CD8-positive, alpha-beta T cell (primary cell): ENCODE measurements at regions of chr17 and their contacts with region 1.

Region 1: GRCh38 chr17:40113110-40113906 is 8.5 kb upstream of the MSL1 start:
- DNase-seq: peak; percentile 86 to 96 (median 93)
- ATAC-seq: peak; percentile 78
- H3K4me3 ChIP-seq: peak overlapping the region; percentile 40
- H3K4me3 Mint-ChIP-seq: peak overlapping the region; percentile 82
- H3K27ac ChIP-seq: peak overlapping the region; percentile 12 to 22
- H3K27ac Mint-ChIP-seq: peak overlapping the region; percentile 89
- H3K4me1 ChIP-seq: peaks cover 55% of the 10 kb centered on the region
- H3K4me1 Mint-ChIP-seq: peaks cover 60% of the 10 kb centered on the region
- H3K27me3 ChIP-seq: no peaks in the 10 kb centered on the region
- H3K27me3 Mint-ChIP-seq: no peaks in the 10 kb centered on the region
- CTCF ChIP-seq: peak; percentile 81

Region 2: DNA sequence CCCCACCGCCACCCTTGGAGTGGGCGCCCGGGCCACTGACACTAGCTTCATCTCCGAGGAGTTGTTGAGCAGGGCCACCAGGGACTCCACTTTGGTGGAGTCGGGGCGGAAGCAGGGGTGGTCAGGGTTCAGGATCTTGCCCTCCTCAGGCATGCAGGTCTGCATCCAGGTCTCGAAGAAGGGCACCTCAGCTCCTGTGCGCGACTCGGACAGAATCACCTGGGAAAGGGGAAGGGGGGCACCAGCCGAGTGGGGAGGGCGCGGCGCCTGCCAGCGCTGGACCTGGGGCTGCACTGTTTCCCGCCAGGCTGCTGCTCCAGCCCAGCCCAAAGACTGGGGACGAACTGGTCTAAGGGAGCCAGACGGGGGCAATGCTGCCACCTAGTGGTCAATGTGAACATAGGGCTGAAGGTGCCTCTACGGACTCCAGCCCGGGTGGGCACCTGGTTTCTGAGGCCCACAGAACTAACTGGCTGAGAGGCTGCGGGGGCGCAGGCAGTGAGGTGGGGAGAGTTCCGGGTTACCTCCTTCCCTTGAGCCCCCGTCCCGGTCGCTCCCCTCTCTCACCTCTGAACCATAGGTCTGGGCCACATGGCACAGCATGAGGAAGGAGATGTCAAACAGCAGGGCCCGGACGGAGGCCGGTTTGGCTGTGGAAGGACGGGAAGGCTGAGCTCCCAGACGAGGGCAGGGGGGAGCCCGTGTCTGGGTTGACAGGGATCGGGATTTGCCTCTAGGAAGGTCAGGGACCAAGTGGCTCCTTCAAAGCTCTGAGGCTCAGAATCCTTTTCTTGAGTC is 86.3 kb before region 1 on chr17:
- CTCF ChIA-PET with region 1: interaction called, 14 read pairs
- POLR2A ChIA-PET with region 1: interaction called, 3 read pairs
- intact Hi-C with region 1: no loop called
- DNase-seq: peak; percentile 45 to 87 (median 78)
- ATAC-seq: peak; percentile 88
- H3K4me3 ChIP-seq: no peak overlapping the region
- H3K4me3 Mint-ChIP-seq: no peak overlapping the region
- H3K27ac ChIP-seq: no peak overlapping the region
- H3K27ac Mint-ChIP-seq: no peak overlapping the region
- H3K4me1 ChIP-seq: peaks cover 21% of the 10 kb centered on the region
- H3K4me1 Mint-ChIP-seq: peaks cover 22% of the 10 kb centered on the region
- H3K27me3 ChIP-seq: no peaks in the 10 kb centered on the region
- H3K27me3 Mint-ChIP-seq: no peaks in the 10 kb centered on the region
- CTCF ChIP-seq: peak; percentile 79

Region 3: GRCh38 chr17:40075201-40075941 is 37.9 kb before region 1 on chr17:
- CTCF ChIA-PET with region 1: interaction called, 122 read pairs
- POLR2A ChIA-PET with region 1: interaction called, 56 read pairs
- intact Hi-C with region 1: loop called in 1 of 2 experiments (anchors 1 kb)
- DNase-seq: peak; percentile 48 to 81 (median 70)
- ATAC-seq: peak; percentile 96
- H3K4me3 ChIP-seq: no peak overlapping the region
- H3K4me3 Mint-ChIP-seq: peak overlapping the region; percentile 45
- H3K27ac ChIP-seq: no peak overlapping the region
- H3K27ac Mint-ChIP-seq: peak overlapping the region; percentile 62
- H3K4me1 ChIP-seq: peaks cover 49% of the 10 kb centered on the region
- H3K4me1 Mint-ChIP-seq: peaks cover 53% of the 10 kb centered on the region
- H3K27me3 ChIP-seq: no peaks in the 10 kb centered on the region
- H3K27me3 Mint-ChIP-seq: no peaks in the 10 kb centered on the region
- CTCF ChIP-seq: peak; percentile 90

Region 4: GRCh38 chr17:40098846-40099618 is 14.3 kb before region 1 on chr17:
- CTCF ChIA-PET with region 1: interaction called, 237 read pairs
- POLR2A ChIA-PET with region 1: interaction called, 141 read pairs
- intact Hi-C with region 1: loop called (anchors 1 kb)
- DNase-seq: peak; percentile 97 to 100 (median 99)
- ATAC-seq: peak; percentile 64
- H3K4me3 ChIP-seq: peak overlapping the region; percentile 75 to 90
- H3K4me3 Mint-ChIP-seq: peak overlapping the region; percentile 94
- H3K27ac ChIP-seq: peak overlapping the region; percentile 79 to 98
- H3K27ac Mint-ChIP-seq: peak overlapping the region; percentile 95
- H3K4me1 ChIP-seq: peaks cover 80% of the 10 kb centered on the region
- H3K4me1 Mint-ChIP-seq: peaks cover 88% of the 10 kb centered on the region
- H3K27me3 ChIP-seq: no peaks in the 10 kb centered on the region
- H3K27me3 Mint-ChIP-seq: no peaks in the 10 kb centered on the region
- CTCF ChIP-seq: no peak

Region 5: DNA sequence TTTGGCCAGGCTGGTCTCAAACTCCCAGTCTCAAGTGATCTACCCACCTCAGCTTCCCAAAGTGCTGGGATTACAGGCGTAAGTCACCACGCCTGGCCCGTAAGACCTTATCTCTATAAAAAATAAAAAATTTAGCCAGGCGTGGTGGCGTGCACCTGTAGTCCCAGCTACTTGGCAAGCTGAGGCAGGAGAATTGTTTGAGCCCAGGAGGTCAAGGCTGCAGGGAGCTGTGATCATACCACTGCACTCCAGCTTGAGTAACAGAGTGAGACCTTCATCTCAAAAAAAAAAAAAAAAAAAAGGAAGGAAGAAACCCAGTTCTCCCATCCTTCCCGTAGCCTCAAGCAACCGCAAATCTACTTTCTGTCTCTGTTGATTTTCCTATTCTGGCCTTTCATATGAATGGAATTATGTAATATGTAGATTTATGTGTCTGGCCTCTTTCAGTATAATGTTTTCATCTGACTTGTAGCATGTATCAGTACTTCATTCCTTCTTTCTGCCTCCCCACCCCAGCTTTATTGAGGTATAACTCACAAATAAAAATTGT is 38.2 kb after region 1 on chr17:
- CTCF ChIA-PET with region 1: interaction called, 12 read pairs
- POLR2A ChIA-PET with region 1: no interaction called
- intact Hi-C with region 1: no loop called
- DNase-seq: no peak
- ATAC-seq: no peak
- H3K4me3 ChIP-seq: no peak overlapping the region
- H3K4me3 Mint-ChIP-seq: no peak overlapping the region
- H3K27ac ChIP-seq: no peak overlapping the region
- H3K27ac Mint-ChIP-seq: no peak overlapping the region
- H3K4me1 ChIP-seq: peaks cover 14% of the 10 kb centered on the region
- H3K4me1 Mint-ChIP-seq: peaks cover 58% of the 10 kb centered on the region
- H3K27me3 ChIP-seq: no peaks in the 10 kb centered on the region
- H3K27me3 Mint-ChIP-seq: no peaks in the 10 kb centered on the region
- CTCF ChIP-seq: no peak

Region 6: GRCh38 chr17:40177275-40177874 is 64.1 kb after region 1 on chr17 and contains the start of gene RAPGEFL1:
- CTCF ChIA-PET with region 1: interaction called, 50 read pairs
- POLR2A ChIA-PET with region 1: interaction called, 4 read pairs
- intact Hi-C with region 1: no loop called
- DNase-seq: peak; percentile 70 to 90 (median 81)
- ATAC-seq: peak; percentile 99
- H3K4me3 ChIP-seq: peak within 1 kb of the TSS; percentile 53 to 54
- H3K4me3 Mint-ChIP-seq: peak within 1 kb of the TSS; percentile 72
- H3K27ac ChIP-seq: no peak within 1 kb of the TSS
- H3K27ac Mint-ChIP-seq: no peak within 1 kb of the TSS
- H3K4me1 ChIP-seq: peaks cover 12% of the 10 kb centered on the region
- H3K4me1 Mint-ChIP-seq: peaks cover 11% of the 10 kb centered on the region
- H3K27me3 ChIP-seq: no peaks in the 10 kb centered on the region
- H3K27me3 Mint-ChIP-seq: no peaks in the 10 kb centered on the region
- CTCF ChIP-seq: no peak
- total RNA-seq, gene RAPGEFL1: 8.8 to 9.2 TPM

Region 7: GRCh38 chr17:40241252-40241834 is 128.0 kb after region 1 on chr17:
- CTCF ChIA-PET with region 1: no interaction called
- POLR2A ChIA-PET with region 1: no interaction called
- intact Hi-C with region 1: no loop called
- DNase-seq: no peak
- ATAC-seq: no peak
- H3K4me3 ChIP-seq: no peak overlapping the region
- H3K4me3 Mint-ChIP-seq: no peak overlapping the region
- H3K27ac ChIP-seq: no peak overlapping the region
- H3K27ac Mint-ChIP-seq: no peak overlapping the region
- H3K4me1 ChIP-seq: no peaks in the 10 kb centered on the region
- H3K4me1 Mint-ChIP-seq: peaks cover 48% of the 10 kb centered on the region
- H3K27me3 ChIP-seq: no peaks in the 10 kb centered on the region
- H3K27me3 Mint-ChIP-seq: no peaks in the 10 kb centered on the region
- CTCF ChIP-seq: no peak

Region 8: GRCh38 chr17:40287494-40288369 is 174.4 kb after region 1 on chr17 and contains the start of gene CDC6:
- CTCF ChIA-PET with region 1: interaction called, 3 read pairs
- POLR2A ChIA-PET with region 1: no interaction called
- intact Hi-C with region 1: loop called in 1 of 2 experiments (anchors 2 kb)
- DNase-seq: peak; percentile 97 to 99 (median 98)
- ATAC-seq: peak; percentile 91
- H3K4me3 ChIP-seq: peak within 1 kb of the TSS; percentile 73 to 84
- H3K4me3 Mint-ChIP-seq: peak within 1 kb of the TSS; percentile 97
- H3K27ac ChIP-seq: peak within 1 kb of the TSS; percentile 21 to 36
- H3K27ac Mint-ChIP-seq: peak within 1 kb of the TSS; percentile 89
- H3K4me1 ChIP-seq: peaks cover 5% of the 10 kb centered on the region
- H3K4me1 Mint-ChIP-seq: peaks cover 22% of the 10 kb centered on the region
- H3K27me3 ChIP-seq: no peaks in the 10 kb centered on the region
- H3K27me3 Mint-ChIP-seq: no peaks in the 10 kb centered on the region
- CTCF ChIP-seq: no peak
- total RNA-seq, gene CDC6: 2.0 to 2.9 TPM